CD4-positive, alpha-beta memory T cell (primary cell): ENCODE measurements at regions of chr3 and their contacts with region 1.

Region 1: GRCh38 chr3:51391075-51391567 is at the start of gene RBM15B:
- DNase-seq: peak; percentile 96 to 98 (median 97)
- H3K4me3 ChIP-seq: peak within 1 kb of the TSS; percentile 57
- H3K4me3 Mint-ChIP-seq: peak within 1 kb of the TSS; percentile 76 to 91 (median 83)
- H3K27ac ChIP-seq: peak within 1 kb of the TSS; percentile 79
- H3K27ac Mint-ChIP-seq: peak within 1 kb of the TSS; percentile 89 to 97 (median 95)
- H3K4me1 ChIP-seq: peaks cover 69% of the 10 kb centered on the region
- H3K4me1 Mint-ChIP-seq: peaks cover 33 to 81% (median 61%) of the 10 kb centered on the region in 4 donors
- H3K27me3 ChIP-seq: no peaks in the 10 kb centered on the region
- H3K27me3 Mint-ChIP-seq: no peaks in the 10 kb centered on the region
- total RNA-seq, gene RBM15B: 38.3 to 39.9 TPM

Region 2: GRCh38 chr3:50519471-50520089 is 871.5 kb before region 1 on chr3:
- CTCF ChIA-PET with region 1: no interaction called
- POLR2A ChIA-PET with region 1: no interaction called
- intact Hi-C with region 1: no loop called
- DNase-seq: peak; percentile 58 to 68 (median 66)
- H3K4me3 ChIP-seq: no peak overlapping the region
- H3K4me3 Mint-ChIP-seq: no peak overlapping the region
- H3K27ac ChIP-seq: no peak overlapping the region
- H3K27ac Mint-ChIP-seq: peak overlapping the region in 1 of 7 donors; percentile 17
- H3K4me1 ChIP-seq: peaks cover 4% of the 10 kb centered on the region
- H3K4me1 Mint-ChIP-seq: peaks cover 3 to 10% (median 5%) of the 10 kb centered on the region in 4 donors
- H3K27me3 ChIP-seq: no peaks in the 10 kb centered on the region
- H3K27me3 Mint-ChIP-seq: peaks cover 0 to 5% of the 10 kb centered on the region in 2 donors

Region 3: GRCh38 chr3:51024765-51025632 is 366.1 kb before region 1 on chr3:
- CTCF ChIA-PET with region 1: interaction called, 18 read pairs
- POLR2A ChIA-PET with region 1: interaction called, 4 read pairs
- intact Hi-C with region 1: no loop called
- DNase-seq: peak; percentile 82 to 93 (median 86)
- H3K4me3 ChIP-seq: peak overlapping the region; percentile 39 to 50
- H3K4me3 Mint-ChIP-seq: peak overlapping the region; percentile 68 to 91 (median 81)
- H3K27ac ChIP-seq: peak overlapping the region; percentile 60
- H3K27ac Mint-ChIP-seq: peak overlapping the region; percentile 92 to 98 (median 95)
- H3K4me1 ChIP-seq: peaks cover 45% of the 10 kb centered on the region
- H3K4me1 Mint-ChIP-seq: peaks cover 42 to 69% (median 50%) of the 10 kb centered on the region in 4 donors
- H3K27me3 ChIP-seq: no peaks in the 10 kb centered on the region
- H3K27me3 Mint-ChIP-seq: peaks cover 0 to 1% of the 10 kb centered on the region in 2 donors

Region 4: GRCh38 chr3:51379301-51379700 is 11.8 kb before region 1 on chr3:
- CTCF ChIA-PET with region 1: interaction called, 14 read pairs
- POLR2A ChIA-PET with region 1: interaction called, 15 read pairs
- intact Hi-C with region 1: no loop called
- DNase-seq: no peak
- H3K4me3 ChIP-seq: no peak overlapping the region
- H3K4me3 Mint-ChIP-seq: no peak overlapping the region
- H3K27ac ChIP-seq: no peak overlapping the region
- H3K27ac Mint-ChIP-seq: peak overlapping the region in 1 of 7 donors; percentile 44
- H3K4me1 ChIP-seq: peaks cover 14% of the 10 kb centered on the region
- H3K4me1 Mint-ChIP-seq: peaks cover 4 to 21% (median 9%) of the 10 kb centered on the region in 4 donors
- H3K27me3 ChIP-seq: no peaks in the 10 kb centered on the region
- H3K27me3 Mint-ChIP-seq: no peaks in the 10 kb centered on the region

Region 5: DNA sequence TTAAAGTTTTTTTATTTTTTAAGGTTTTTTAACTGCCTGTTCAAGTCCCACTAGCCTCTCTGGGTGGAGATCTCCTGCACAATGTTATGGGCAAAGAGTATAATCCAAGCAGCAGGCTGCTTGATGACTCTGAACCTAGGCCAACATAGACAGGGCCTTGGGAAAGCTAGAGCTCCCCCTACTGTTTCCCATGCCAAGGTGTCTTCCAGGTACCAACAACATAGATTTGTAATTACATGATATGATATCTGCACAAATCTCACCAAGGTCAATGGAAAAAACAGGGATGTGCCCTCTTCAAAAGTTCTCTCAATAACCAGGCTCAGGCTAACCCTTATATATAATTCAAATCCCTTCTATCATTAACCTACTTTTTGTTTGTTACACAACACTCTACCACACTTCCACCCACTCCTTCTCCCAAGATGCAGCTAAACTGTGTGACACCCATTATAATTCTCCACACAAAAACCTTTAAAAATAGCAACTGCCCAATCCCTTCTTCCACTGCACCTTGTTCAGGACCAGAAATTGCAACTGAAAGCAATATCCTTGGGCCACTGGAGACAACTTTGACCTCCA is 43.7 kb after region 1 on chr3:
- CTCF ChIA-PET with region 1: interaction called, 46 read pairs
- POLR2A ChIA-PET with region 1: interaction called, 7 read pairs
- intact Hi-C with region 1: loop called (anchors 1 kb)
- DNase-seq: peak; percentile 48 to 56 (median 53)
- H3K4me3 ChIP-seq: no peak overlapping the region
- H3K4me3 Mint-ChIP-seq: no peak overlapping the region
- H3K27ac ChIP-seq: no peak overlapping the region
- H3K27ac Mint-ChIP-seq: peak overlapping the region in 6 of 7 donors; percentile 31 to 81 (median 55)
- H3K4me1 ChIP-seq: no peaks in the 10 kb centered on the region
- H3K4me1 Mint-ChIP-seq: peaks cover 7 to 13% (median 8%) of the 10 kb centered on the region in 4 donors
- H3K27me3 ChIP-seq: no peaks in the 10 kb centered on the region
- H3K27me3 Mint-ChIP-seq: no peaks in the 10 kb centered on the region

Region 6: GRCh38 chr3:51445544-51446280 is 54.6 kb after region 1 on chr3:
- CTCF ChIA-PET with region 1: interaction called, 17 read pairs
- POLR2A ChIA-PET with region 1: no interaction called
- intact Hi-C with region 1: no loop called
- DNase-seq: no peak
- H3K4me3 ChIP-seq: no peak overlapping the region
- H3K4me3 Mint-ChIP-seq: no peak overlapping the region
- H3K27ac ChIP-seq: no peak overlapping the region
- H3K27ac Mint-ChIP-seq: peak overlapping the region in 2 of 7 donors; percentile 25 to 57
- H3K4me1 ChIP-seq: peaks cover 15% of the 10 kb centered on the region
- H3K4me1 Mint-ChIP-seq: peaks cover 26 to 42% (median 40%) of the 10 kb centered on the region in 4 donors
- H3K27me3 ChIP-seq: no peaks in the 10 kb centered on the region
- H3K27me3 Mint-ChIP-seq: no peaks in the 10 kb centered on the region